Endothelial cell of umbilical vein (primary cell): ENCODE measurements at regions of chr5 and their contacts with region 1.

Region 1: GRCh38 chr5:141387233-141387949 is at the start of gene PCDHGB4:
- DNase-seq: peak; percentile 30
- H3K4me3 ChIP-seq: peak within 1 kb of the TSS in 2 of 3 experiments; percentile 9 to 22
- H3K27ac ChIP-seq: no peak within 1 kb of the TSS
- H3K4me1 ChIP-seq: no peaks in the 10 kb centered on the region
- H3K27me3 ChIP-seq: peaks cover 35 to 78% of the 10 kb centered on the region in 2 experiments
- CTCF ChIP-seq: peak; percentile 46 to 51
- POLR2A ChIP-seq: no peak
- total RNA-seq, gene PCDHGB4: 4.4 and 6.5 TPM in 2 replicates

Region 2: GRCh38 chr5:141402553-141403260 is 15.3 kb after region 1 on chr5 and contains the start of gene PCDHGA9:
- CTCF ChIA-PET with region 1: interaction called, 32 read pairs
- POLR2A ChIA-PET with region 1: no interaction called
- dilution Hi-C with region 1: no loop called
- intact Hi-C with region 1: no loop called
- DNase-seq: no peak
- H3K4me3 ChIP-seq: peak within 1 kb of the TSS in 2 of 3 experiments; percentile 9 to 28
- H3K27ac ChIP-seq: no peak within 1 kb of the TSS
- H3K4me1 ChIP-seq: peaks cover 2% of the 10 kb centered on the region
- H3K27me3 ChIP-seq: peaks cover 47 to 68% of the 10 kb centered on the region in 2 experiments
- CTCF ChIP-seq: peak; percentile 37 to 57
- POLR2A ChIP-seq: no peak
- total RNA-seq, gene PCDHGA9: 3.5 and 3.9 TPM in 2 replicates